ENCODE measurements at regions of chr1 and their contacts with region 1.

Region 1: GRCh38 chr1:34865981-34866761 is 6.6 kb upstream of the SMIM12 start:
- DNase-seq: peak; percentile 93
- ATAC-seq: peak; percentile 78
- H3K4me3 Mint-ChIP-seq: peak overlapping the region; percentile 73
- H3K27ac Mint-ChIP-seq: no peak overlapping the region
- H3K4me1 Mint-ChIP-seq: 0 out of 2 replicates have a peak, but pooled peaks cover 2% of the 10 kb centered on the region
- H3K27me3 Mint-ChIP-seq: peaks cover 45% of the 10 kb centered on the region
- CTCF ChIP-seq: peak; percentile 99

Region 2: GRCh38 chr1:34770891-34771508 is 95.2 kb before region 1 on chr1:
- CTCF ChIA-PET with region 1: no interaction called
- POLR2A ChIA-PET with region 1: no interaction called
- DNase-seq: no peak
- ATAC-seq: no peak
- H3K4me3 Mint-ChIP-seq: no peak overlapping the region
- H3K27ac Mint-ChIP-seq: no peak overlapping the region
- H3K4me1 Mint-ChIP-seq: no peaks in the 10 kb centered on the region
- H3K27me3 Mint-ChIP-seq: no peaks in the 10 kb centered on the region; the same call in 1 of the 2 replicates
- CTCF ChIP-seq: no peak

Region 3: GRCh38 chr1:34879230-34879629 is 13.1 kb after region 1 on chr1:
- CTCF ChIA-PET with region 1: interaction called, 41 read pairs
- POLR2A ChIA-PET with region 1: no interaction called
- DNase-seq: peak; percentile 67
- ATAC-seq: peak; percentile 51; the same call in 1 of the 2 replicates
- H3K4me3 Mint-ChIP-seq: no peak overlapping the region
- H3K27ac Mint-ChIP-seq: no peak overlapping the region
- H3K4me1 Mint-ChIP-seq: 0 out of 2 replicates have a peak, but pooled peaks cover 3% of the 10 kb centered on the region
- H3K27me3 Mint-ChIP-seq: peaks cover 11% of the 10 kb centered on the region
- CTCF ChIP-seq: no peak

Measured in WTC11 (cell line).